SK-N-SH (cell line): ENCODE measurements at regions of chr4 and their contacts with region 1.

Region 1: DNA sequence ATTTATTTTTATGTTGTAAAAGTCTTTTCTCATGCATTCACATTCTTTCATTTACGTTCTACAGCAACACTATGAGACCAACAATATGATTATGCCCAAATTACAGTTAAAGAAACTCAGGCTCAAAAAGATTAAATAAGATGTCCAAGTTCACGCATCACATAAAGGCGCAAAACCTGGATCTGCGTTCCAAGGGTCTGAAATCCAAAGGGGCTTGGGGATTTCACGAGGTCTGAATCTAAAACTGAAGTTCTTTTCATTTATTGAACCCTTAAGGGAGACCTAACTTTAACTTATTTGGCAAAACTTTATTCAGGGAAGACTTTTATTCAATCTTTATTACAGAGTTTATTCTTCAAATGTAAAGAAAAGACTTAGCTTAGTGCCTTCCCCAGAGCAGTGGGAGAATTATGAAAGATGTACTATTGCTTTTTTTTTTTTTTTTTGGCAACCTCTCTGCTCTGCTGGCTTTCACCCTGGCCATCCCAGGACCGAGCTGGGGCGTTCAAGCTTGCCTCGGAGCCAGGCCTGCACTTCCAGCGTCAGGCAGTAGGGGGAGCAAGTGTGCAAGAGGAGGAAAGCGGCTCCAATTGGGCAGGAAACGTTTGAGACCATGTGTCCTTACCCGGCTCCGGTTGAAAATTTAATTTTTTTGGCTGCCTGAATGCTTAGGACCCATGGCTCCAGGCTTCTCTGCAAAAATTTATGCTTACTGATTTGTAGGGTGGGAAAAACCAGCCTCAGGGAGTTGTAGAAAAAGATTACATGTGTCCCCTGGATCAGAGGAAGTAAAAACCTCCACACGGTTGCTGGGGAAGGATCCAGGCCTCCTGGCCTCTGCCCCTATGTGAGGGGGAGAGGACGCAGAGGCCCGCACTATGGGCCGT is 344.3 kb upstream of the KLF3 start:
- DNase-seq: peak; percentile 94
- H3K4me3 ChIP-seq: no peak overlapping the region; a peak in 1 of 4 replicates
- H3K27ac ChIP-seq: peak overlapping the region in 1 of 2 experiments; percentile 89; a peak in 2 of 4 replicates
- H3K4me1 ChIP-seq: peaks cover 0 to 7% of the 10 kb centered on the region in 2 experiments; a peak in 1 of 4 replicates
- H3K27me3 ChIP-seq: no peaks in the 10 kb centered on the region
- CTCF ChIP-seq: peak; percentile 94
- EP300 ChIP-seq: peak in 1 of 2 experiments; percentile 58; a peak in 2 of 4 replicates
- RAD21 ChIP-seq: peak; percentile 94

Region 2: DNA sequence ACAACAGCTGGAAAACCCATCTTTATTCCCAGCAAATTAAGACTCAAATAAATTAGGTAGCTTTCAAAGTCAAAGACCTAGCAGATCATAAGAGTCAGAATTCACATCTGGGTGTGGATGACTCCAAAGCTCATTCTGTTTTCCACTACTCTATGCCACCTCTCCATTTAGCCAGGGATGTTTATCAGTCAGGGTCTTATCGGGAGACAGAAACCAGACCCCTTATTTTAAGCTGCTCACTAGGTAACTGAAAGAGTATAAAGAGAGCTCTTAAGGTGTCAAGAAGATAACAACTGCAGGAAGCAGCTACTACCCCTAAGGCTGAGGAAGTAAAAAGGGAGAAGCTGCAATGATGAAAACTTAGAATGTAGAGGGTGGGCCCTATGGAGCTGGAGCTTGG is 10.6 kb after region 1 on chr4:
- CTCF ChIA-PET with region 1: interaction called, 19 read pairs
- POLR2A ChIA-PET with region 1: no interaction called
- DNase-seq: peak; percentile 71
- H3K4me3 ChIP-seq: no peak overlapping the region
- H3K27ac ChIP-seq: peak overlapping the region in 1 of 2 experiments; percentile 82; a peak in 2 of 4 replicates
- H3K4me1 ChIP-seq: peaks cover 4 to 17% of the 10 kb centered on the region in 2 experiments; a peak in 3 of 4 replicates
- H3K27me3 ChIP-seq: no peaks in the 10 kb centered on the region; the same call in 1 of the 2 replicates
- CTCF ChIP-seq: no peak
- EP300 ChIP-seq: peak in 1 of 2 experiments; percentile 58; a peak in 1 of 4 replicates
- RAD21 ChIP-seq: no peak

Region 3: DNA sequence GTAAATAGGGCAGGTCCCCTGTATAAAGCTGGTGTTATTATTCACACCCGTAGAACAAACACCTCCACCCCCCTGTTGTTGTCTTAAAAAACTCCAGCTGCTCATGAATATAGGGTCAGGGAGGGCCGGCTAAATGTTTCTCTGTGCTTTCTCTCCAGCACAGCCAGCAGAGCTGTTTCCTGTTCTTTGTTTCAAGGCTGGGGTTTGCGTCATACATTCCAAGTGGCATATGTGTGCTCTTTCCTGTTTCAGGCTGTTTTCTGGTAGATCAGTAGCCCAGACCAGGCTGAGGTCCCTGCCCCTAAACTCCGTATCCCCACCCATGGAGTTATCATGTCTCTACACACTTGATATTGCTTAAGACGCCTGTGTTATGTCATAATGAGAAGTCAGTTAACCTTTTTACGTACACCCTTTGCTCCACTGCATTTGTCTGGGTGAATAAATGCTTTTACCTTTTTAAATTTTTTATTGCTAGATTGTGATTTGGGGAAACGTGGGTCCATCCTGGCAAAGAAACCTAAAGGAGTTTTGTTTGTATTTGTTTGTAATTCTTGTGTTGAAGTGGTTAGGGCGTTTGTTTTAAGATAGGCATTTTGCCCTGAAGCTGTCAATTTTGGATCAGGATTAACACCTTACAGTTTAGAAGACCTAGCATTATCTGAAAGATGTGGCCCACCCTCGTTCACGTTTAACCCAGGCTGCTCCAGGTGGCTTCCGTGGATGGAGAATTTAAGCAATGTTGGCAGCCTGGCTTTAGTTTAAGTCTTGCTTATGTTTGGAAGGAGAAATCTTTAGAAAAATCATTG is 347.6 kb after region 1 on chr4:
- CTCF ChIA-PET with region 1: interaction called, 27 read pairs
- POLR2A ChIA-PET with region 1: no interaction called
- DNase-seq: peak; percentile 77
- H3K4me3 ChIP-seq: peak overlapping the region; percentile 85 to 88
- H3K27ac ChIP-seq: peak overlapping the region; percentile 97 to 99
- H3K4me1 ChIP-seq: peaks cover 44 to 54% of the 10 kb centered on the region in 2 experiments
- H3K27me3 ChIP-seq: no peaks in the 10 kb centered on the region
- CTCF ChIP-seq: no peak
- EP300 ChIP-seq: peak; percentile 44 to 47; a peak in 2 of 4 replicates
- RAD21 ChIP-seq: peak; percentile 25

Region 4: DNA sequence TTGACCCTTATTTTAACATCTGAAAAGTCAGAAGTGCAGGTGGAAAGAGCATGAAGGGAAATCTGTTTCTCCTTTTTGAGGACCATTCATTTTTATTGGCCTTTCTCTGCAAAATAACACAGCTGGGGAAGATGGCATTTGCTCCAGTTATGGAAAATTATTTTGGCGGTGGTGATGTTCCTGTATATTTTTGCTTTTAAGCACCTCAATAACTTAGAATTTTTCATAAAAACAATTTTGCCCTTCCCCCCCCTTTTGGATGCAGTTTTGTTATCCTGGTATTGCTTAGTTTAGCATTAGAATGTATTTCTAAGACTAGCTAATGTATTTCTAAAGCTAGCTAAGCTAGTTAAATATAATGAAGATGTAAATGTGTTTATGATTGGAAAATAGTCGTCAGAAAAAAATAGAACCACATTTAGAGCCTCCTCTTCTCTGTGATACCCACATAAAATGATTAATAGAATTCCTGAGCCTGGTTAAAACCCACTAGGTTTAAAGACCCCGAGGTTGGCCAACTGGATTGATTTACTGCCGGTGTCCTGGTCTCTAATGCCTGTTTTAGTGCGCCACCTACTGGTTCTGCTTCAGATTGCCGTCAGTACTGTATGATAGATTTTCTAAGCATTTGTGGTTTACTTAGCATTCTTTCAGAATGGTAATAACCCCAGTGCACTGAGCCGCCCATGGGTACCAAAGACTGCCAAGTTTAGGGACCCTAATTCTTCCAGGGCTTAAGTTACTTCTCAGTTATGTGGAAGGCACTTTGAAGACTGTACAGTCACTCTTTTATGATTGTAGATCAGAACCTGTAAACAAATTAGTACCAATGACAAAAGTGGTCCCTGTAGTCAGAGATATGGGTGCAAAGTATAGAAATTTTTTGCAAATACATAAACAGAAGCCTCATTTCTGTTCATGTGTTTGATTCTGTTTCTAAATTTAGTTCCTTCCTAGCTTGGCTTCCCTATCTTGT is 355.7 kb after region 1 on chr4:
- CTCF ChIA-PET with region 1: interaction called, 97 read pairs
- POLR2A ChIA-PET with region 1: interaction called, 6 read pairs
- DNase-seq: peak; percentile 73
- H3K4me3 ChIP-seq: peak overlapping the region in 1 of 2 experiments; percentile 29; a peak in 1 of 4 replicates
- H3K27ac ChIP-seq: peak overlapping the region; percentile 51 to 85; a peak in 3 of 4 replicates
- H3K4me1 ChIP-seq: peaks cover 46 to 55% of the 10 kb centered on the region in 2 experiments
- H3K27me3 ChIP-seq: no peaks in the 10 kb centered on the region
- CTCF ChIP-seq: peak; percentile 97
- EP300 ChIP-seq: no peak
- RAD21 ChIP-seq: peak; percentile 98

Region 5: DNA sequence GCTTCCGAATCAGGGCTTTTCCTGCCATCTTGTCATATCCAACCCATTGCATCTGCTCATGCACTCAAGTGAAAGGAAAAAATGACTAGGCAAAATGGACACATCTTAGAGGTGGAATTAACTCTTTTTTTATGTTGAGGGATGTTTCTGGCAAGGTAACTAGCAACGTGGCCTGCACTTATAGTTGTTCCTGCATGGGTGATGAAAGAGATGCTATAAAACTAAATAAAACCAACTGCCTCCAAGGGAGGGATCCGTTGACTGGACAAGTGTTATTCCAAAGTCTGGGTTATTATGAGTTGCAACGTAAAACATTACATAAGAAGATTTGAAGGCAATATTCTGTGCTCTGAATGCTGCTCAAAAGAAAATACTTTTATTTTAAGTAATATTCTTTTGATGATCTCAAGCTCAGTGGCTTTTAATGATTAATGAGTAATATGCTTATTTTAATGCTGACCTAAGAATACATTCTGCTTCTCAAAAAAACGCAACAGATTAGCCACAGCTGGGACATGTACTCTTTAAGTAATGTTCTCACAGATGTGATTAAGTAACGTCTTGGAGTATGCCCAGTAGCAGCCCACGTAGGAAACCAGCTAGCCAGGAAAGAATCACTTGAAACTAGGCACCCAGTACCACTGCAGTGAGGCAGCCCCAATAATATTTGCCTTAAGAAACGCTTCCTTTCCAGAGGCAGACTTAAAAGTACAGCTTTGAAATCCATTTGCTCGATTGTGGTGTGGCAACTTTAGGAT is 371.7 kb after region 1 on chr4:
- CTCF ChIA-PET with region 1: interaction called, 14 read pairs
- POLR2A ChIA-PET with region 1: interaction called, 3 read pairs
- DNase-seq: no peak
- H3K4me3 ChIP-seq: no peak overlapping the region
- H3K27ac ChIP-seq: no peak overlapping the region
- H3K4me1 ChIP-seq: peaks cover 3 to 13% of the 10 kb centered on the region in 2 experiments; a peak in 3 of 4 replicates
- H3K27me3 ChIP-seq: no peaks in the 10 kb centered on the region
- CTCF ChIP-seq: no peak
- EP300 ChIP-seq: no peak
- RAD21 ChIP-seq: no peak

Region 6: DNA sequence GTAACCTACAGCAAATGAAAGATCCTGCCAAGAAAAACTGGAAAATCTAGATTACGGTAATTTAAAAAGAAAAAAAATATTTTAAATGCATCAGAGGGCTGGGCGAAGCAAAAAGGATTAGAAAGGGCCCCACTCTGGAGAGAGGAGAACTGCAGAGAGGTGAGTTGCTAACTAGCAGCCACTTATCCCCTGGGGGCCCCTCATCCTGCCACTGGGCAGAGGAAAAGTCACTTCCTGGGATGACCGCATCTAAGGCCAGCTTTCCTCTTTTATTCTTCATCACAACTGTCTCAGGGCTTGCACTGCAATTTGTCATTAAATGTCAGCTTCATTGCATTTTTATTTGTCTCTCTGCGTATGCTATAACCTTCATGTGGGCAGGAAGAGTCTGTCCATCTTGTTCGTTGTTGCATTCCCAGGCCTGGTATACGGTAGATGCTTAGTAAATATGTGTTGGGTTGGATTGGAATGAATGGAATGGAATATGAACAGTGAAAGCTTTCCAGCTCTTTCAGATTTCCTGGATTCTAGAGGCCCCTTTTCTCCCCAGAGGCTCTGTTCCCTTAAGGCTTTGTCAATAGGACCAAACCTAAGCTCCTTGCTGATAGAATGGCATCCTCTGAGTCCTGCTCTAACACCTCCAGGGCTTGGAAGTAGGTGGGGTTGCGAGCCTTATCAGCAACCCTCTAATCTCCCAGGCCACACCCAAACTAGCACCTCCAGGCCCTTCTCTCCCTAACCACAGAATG is 404.2 kb after region 1 on chr4:
- CTCF ChIA-PET with region 1: interaction called, 19 read pairs
- POLR2A ChIA-PET with region 1: no interaction called
- DNase-seq: no peak
- H3K4me3 ChIP-seq: no peak overlapping the region
- H3K27ac ChIP-seq: no peak overlapping the region
- H3K4me1 ChIP-seq: no peaks in the 10 kb centered on the region
- H3K27me3 ChIP-seq: no peaks in the 10 kb centered on the region
- CTCF ChIP-seq: no peak
- EP300 ChIP-seq: no peak
- RAD21 ChIP-seq: no peak